ENCODE measurements at regions of chr5 and their contacts with region 1.

Region 1: DNA sequence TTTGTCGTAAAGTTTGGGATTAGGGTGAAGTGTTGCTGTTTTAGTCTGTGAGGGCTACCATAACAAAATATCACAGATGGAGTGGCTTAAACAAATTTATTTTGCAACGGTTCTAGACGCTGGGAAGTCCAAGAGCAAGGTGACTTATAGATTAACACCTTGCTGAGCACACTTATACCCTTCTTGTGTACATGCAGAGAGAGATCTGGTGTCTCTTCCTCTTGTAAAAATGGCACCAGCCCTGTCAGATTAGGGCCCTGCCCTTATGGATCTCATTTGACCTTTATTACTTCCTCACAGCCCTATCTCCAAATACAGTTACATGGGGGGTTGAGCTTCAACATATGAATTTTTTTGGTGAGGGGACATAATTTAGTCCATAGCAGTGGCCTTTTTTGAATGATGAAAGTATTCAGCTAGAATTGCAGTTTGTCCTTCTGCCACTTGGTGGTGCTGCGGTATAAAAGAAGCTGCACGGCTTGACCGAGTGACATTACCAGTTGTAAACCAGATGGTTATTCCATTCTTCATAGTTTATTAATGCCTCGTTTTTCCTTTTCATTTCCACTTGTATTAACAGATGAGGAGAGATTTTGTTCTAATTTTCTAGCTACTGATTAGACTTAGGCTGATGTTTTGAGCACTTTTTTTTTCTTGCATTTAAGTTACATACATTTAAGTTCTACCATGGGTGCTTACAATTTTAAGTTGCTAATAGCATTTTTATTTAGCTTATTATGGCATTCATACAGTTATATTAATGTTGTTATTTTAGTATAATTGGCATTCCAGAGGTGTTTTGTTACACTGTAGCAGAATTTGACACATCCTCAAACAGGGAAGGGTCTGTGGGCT is 19.4 kb downstream of the DCP2 start:
- DNase-seq: peak; percentile 45 to 64
- ATAC-seq: peak; percentile 76 to 94 (median 85)
- H3K4me3 ChIP-seq: no peak overlapping the region
- H3K27ac ChIP-seq: no peak overlapping the region
- H3K4me1 ChIP-seq: no peaks in the 10 kb centered on the region
- H3K27me3 ChIP-seq: no peaks in the 10 kb centered on the region
- CTCF ChIP-seq: peak; percentile 91

Region 2: DNA sequence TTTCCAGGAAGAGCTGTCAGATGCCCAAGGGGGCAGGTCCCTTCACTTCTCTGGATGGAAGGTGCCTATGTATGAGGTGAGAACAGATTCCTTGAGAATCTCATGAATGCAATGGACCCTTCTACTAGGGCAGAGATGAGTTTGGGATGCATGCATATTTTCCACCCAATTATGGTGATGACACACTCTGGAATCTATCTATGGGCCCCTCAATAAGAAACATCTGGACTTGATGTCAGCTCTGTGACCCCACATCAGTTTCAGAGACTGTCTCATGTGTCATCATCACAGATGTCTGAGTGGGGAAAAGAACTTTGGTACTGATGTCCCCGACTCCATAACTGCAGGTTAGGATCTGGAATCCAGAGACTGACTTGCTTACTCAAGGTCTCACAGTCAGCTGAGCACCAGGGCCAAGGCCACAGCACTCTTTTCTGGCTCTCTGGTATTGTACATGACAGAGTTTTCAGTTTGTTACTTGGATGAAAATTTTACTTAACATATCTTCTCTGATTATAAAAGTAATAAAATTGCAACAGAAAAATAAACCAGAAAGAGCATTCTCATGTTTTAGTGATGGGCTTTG is 157.6 kb after region 1 on chr5:
- intact Hi-C with region 1: no loop called
- DNase-seq: no peak
- ATAC-seq: no peak
- H3K4me3 ChIP-seq: no peak overlapping the region
- H3K27ac ChIP-seq: no peak overlapping the region
- H3K4me1 ChIP-seq: no peaks in the 10 kb centered on the region
- H3K27me3 ChIP-seq: no peaks in the 10 kb centered on the region
- CTCF ChIP-seq: no peak

Region 3: DNA sequence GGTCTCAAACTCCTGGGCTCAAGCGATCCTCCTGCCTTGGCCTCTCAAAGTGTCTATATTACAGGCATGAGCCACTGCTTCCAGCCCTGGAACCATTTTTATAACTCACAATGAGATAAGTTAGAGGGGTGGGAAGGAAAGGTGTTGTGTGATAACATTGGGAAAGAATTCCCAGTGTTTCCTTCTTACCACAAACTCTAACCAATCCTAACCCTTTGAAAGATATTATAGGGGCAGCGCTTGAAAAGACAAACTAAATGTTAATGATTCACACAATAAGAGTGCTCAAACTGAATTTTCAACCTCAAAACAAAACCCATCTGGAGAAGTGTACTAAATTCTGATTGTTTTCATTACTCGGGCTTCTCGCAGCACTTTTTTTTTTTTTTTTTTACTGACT is 329.1 kb after region 1 on chr5:
- intact Hi-C with region 1: loop called in 1 of 2 experiments (anchors 5 kb)
- DNase-seq: no peak
- ATAC-seq: no peak
- H3K4me3 ChIP-seq: no peak overlapping the region
- H3K27ac ChIP-seq: no peak overlapping the region
- H3K4me1 ChIP-seq: no peaks in the 10 kb centered on the region
- H3K27me3 ChIP-seq: no peaks in the 10 kb centered on the region
- CTCF ChIP-seq: no peak

Region 4: GRCh38 chr5:113606298-113607134 is 610.5 kb after region 1 on chr5:
- intact Hi-C with region 1: loop called (anchors 5 kb)
- DNase-seq: no peak
- ATAC-seq: peak; percentile 73 to 88 (median 80)
- H3K4me3 ChIP-seq: no peak overlapping the region
- H3K27ac ChIP-seq: no peak overlapping the region
- H3K4me1 ChIP-seq: no peaks in the 10 kb centered on the region
- H3K27me3 ChIP-seq: no peaks in the 10 kb centered on the region
- CTCF ChIP-seq: peak; percentile 72

Measured in psoas muscle (tissue), 8 donors.